IMR-90 (cell line): ENCODE measurements at regions of chr9 and their contacts with region 1.

Region 1: DNA sequence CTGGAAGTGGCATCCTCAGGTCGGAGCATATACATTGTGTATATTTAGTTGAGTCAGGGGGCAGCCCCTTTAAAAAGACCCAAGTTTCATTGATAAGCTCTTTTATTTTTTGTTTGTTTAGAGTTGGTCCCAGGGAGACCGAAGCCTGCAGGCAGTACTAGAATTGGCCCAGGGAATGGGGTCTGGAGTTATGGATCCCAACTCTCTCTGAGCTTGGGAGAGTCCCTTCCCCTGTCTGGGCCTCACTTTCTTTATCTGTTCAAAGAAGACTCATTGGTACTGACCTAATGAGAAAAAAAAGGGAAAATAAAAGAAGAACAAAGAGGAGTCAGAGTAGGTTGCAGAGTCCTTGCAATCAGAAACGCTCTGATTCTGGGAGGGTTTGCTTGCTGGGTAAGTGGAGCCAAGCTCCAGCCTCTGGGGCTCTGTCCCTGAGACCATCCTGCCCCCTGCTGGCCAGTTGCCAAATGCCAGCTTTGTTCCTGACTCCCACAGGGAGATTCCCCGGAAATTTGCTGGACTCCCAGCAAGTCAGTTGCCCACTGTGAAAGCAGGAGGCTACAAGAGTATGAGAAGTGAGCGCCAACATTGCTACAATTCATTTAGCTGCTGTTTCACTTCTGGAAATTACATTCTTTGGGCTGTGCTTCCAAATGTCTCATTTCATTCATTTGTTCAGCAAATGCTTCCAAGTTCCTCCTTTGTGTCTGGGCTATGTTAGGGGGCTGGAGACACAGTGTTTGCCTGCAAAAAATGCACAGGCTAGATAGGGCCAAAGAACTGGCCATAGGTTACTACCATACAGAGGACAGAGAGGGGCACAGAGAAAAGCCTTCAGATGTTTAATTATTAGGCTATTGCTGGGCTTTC is 156.2 kb downstream of the MELK start:
- DNase-seq: peak; percentile 78
- ATAC-seq: peak; percentile 91
- H3K4me3 ChIP-seq: no peak overlapping the region
- H3K27ac ChIP-seq: no peak overlapping the region
- H3K4me1 ChIP-seq: no peaks in the 10 kb centered on the region
- H3K27me3 ChIP-seq: no peaks in the 10 kb centered on the region; the same call in 1 of the 2 replicates
- CTCF ChIP-seq: peak; percentile 83
- POLR2A ChIP-seq: 0 out of 2 replicates have a peak, but pooled peaks have one; percentile 46
- RAD21 ChIP-seq: peak; percentile 92

Region 2: GRCh38 chr9:36400332-36401163 is 328.3 kb before region 1 on chr9:
- CTCF ChIA-PET with region 1: no interaction called
- POLR2A ChIA-PET with region 1: no interaction called
- dilution Hi-C with region 1: no loop called
- in situ Hi-C with region 1: loop called (anchors 10 kb)
- intact Hi-C with region 1: no loop called
- DNase-seq: peak; percentile 75
- ATAC-seq: peak; percentile 91
- H3K4me3 ChIP-seq: peak overlapping the region; percentile 65
- H3K27ac ChIP-seq: peak overlapping the region; percentile 97
- H3K4me1 ChIP-seq: peaks cover 2% of the 10 kb centered on the region; the same call in 1 of the 2 replicates
- H3K27me3 ChIP-seq: no peaks in the 10 kb centered on the region
- CTCF ChIP-seq: no peak
- POLR2A ChIP-seq: no peak; the same call in 1 of the 2 replicates
- RAD21 ChIP-seq: no peak

Region 3: GRCh38 chr9:36423206-36423605 is 305.7 kb before region 1 on chr9:
- CTCF ChIA-PET with region 1: no interaction called
- POLR2A ChIA-PET with region 1: no interaction called
- dilution Hi-C with region 1: no loop called
- in situ Hi-C with region 1: no loop called
- intact Hi-C with region 1: loop called (anchors 1 kb)
- DNase-seq: no peak
- ATAC-seq: no peak
- H3K4me3 ChIP-seq: no peak overlapping the region
- H3K27ac ChIP-seq: no peak overlapping the region
- H3K4me1 ChIP-seq: peaks cover 6% of the 10 kb centered on the region
- H3K27me3 ChIP-seq: no peaks in the 10 kb centered on the region
- CTCF ChIP-seq: no peak
- POLR2A ChIP-seq: no peak
- RAD21 ChIP-seq: no peak

Region 4: GRCh38 chr9:36560857-36561221 is 168.0 kb before region 1 on chr9:
- CTCF ChIA-PET with region 1: no interaction called
- POLR2A ChIA-PET with region 1: no interaction called
- dilution Hi-C with region 1: no loop called
- in situ Hi-C with region 1: no loop called
- intact Hi-C with region 1: loop called (anchors 2 kb)
- DNase-seq: peak; percentile 40
- ATAC-seq: peak; percentile 30
- H3K4me3 ChIP-seq: no peak overlapping the region
- H3K27ac ChIP-seq: no peak overlapping the region
- H3K4me1 ChIP-seq: peaks cover 5% of the 10 kb centered on the region; the same call in 1 of the 2 replicates
- H3K27me3 ChIP-seq: no peaks in the 10 kb centered on the region
- CTCF ChIP-seq: no peak
- POLR2A ChIP-seq: no peak
- RAD21 ChIP-seq: no peak

Region 5: GRCh38 chr9:36597412-36598178 is 131.3 kb before region 1 on chr9:
- CTCF ChIA-PET with region 1: interaction called, 6 read pairs
- POLR2A ChIA-PET with region 1: no interaction called
- dilution Hi-C with region 1: no loop called
- in situ Hi-C with region 1: no loop called
- intact Hi-C with region 1: loop called (anchors 1 kb)
- DNase-seq: peak; percentile 70
- ATAC-seq: peak; percentile 92
- H3K4me3 ChIP-seq: no peak overlapping the region
- H3K27ac ChIP-seq: peak overlapping the region; percentile 9; the same call in 1 of the 2 replicates
- H3K4me1 ChIP-seq: peaks cover 6% of the 10 kb centered on the region
- H3K27me3 ChIP-seq: no peaks in the 10 kb centered on the region
- CTCF ChIP-seq: peak; percentile 79
- POLR2A ChIP-seq: no peak
- RAD21 ChIP-seq: peak; percentile 49

Region 6: DNA sequence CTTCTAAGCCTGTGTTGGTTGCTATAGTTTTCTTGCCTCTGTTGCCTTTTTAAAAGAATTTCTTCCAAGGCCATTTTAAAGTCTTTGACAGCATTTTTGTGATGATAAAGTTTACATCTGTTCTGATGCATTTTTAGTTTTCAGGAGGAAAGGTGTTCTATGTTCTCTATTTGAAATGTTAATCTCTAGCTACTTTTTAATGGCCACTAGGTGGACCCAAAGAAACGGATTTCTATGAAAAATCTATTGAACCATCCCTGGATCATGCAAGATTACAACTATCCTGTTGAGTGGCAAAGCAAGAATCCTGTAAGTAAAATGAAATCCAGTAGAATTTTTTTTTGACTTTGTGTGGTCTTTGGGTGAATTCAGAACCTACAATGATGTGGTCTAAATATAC is 96.0 kb before region 1 on chr9:
- CTCF ChIA-PET with region 1: interaction called, 9 read pairs
- POLR2A ChIA-PET with region 1: no interaction called
- dilution Hi-C with region 1: no loop called
- in situ Hi-C with region 1: loop called (anchors 5 kb)
- intact Hi-C with region 1: loop called (anchors 1 kb)
- DNase-seq: peak; percentile 51
- ATAC-seq: peak; percentile 53
- H3K4me3 ChIP-seq: no peak overlapping the region
- H3K27ac ChIP-seq: no peak overlapping the region
- H3K4me1 ChIP-seq: no peaks in the 10 kb centered on the region
- H3K27me3 ChIP-seq: no peaks in the 10 kb centered on the region
- CTCF ChIP-seq: peak; percentile 56
- POLR2A ChIP-seq: no peak
- RAD21 ChIP-seq: peak; percentile 53

Region 7: GRCh38 chr9:36717276-36717675 is 11.6 kb before region 1 on chr9:
- CTCF ChIA-PET with region 1: no interaction called
- POLR2A ChIA-PET with region 1: no interaction called
- dilution Hi-C with region 1: no loop called
- in situ Hi-C with region 1: no loop called
- intact Hi-C with region 1: no loop called
- DNase-seq: peak; percentile 26
- ATAC-seq: no peak
- H3K4me3 ChIP-seq: no peak overlapping the region
- H3K27ac ChIP-seq: no peak overlapping the region
- H3K4me1 ChIP-seq: no peaks in the 10 kb centered on the region; the same call in 1 of the 2 replicates
- H3K27me3 ChIP-seq: peaks cover 8% of the 10 kb centered on the region
- CTCF ChIP-seq: no peak
- POLR2A ChIP-seq: no peak
- RAD21 ChIP-seq: no peak